ENCODE measurements at regions of chr11 and their contacts with region 1.

Region 1: DNA sequence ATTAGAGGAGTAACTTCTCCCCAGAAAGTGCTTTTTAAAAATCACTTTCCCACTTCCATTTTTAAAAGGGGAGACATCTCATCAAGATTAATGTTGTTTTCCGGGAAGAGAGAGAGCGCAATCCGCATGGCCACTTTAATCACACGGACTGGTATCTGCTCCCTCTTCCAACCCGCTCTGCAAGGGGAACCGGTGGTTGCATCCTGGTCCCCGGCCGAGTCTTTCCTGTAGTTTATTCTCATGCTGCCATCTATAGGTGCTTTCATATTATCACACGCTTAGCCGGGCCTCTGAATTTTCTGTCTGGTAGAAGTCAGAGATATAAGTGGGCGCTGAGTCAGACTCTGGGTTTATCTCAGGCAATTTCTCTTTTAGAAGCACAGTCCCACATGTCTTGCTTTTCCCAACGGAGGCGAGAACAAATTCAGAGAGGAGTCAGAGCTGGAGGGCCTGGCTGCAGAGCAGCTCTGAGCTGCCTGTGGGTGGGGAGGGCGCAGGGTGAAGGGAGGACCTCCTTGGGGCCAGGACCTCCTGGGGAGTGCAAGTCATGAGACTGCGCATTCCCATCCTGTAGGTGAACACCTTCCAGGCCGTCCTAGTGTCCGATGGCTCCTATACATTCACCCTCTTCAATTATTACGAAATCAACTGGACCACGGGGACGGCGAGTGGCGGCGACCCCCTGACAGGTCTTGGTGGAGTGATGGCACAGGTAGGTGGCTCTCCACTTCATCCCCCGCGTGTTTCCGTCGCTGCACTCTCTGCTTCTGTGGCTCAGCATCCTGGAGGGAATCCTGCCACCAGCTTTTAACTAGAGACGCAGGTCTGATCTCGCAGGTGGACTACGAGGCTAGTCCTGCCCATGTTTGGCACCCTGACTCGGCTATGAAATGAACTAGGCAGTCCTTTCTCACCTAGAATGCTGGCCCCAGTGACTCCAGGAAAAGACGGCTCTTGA is 11.7 kb downstream of the TECTA start:
- DNase-seq: peak in 3 of 5 donors; percentile 12 to 15 (median 15)
- H3K4me3 ChIP-seq: no peak overlapping the region
- H3K4me3 Mint-ChIP-seq: no peak overlapping the region
- H3K27ac ChIP-seq: no peak overlapping the region
- H3K27ac Mint-ChIP-seq: no peak overlapping the region
- H3K4me1 ChIP-seq: no peaks in the 10 kb centered on the region
- H3K4me1 Mint-ChIP-seq: no peaks in the 10 kb centered on the region
- H3K27me3 ChIP-seq: peaks cover 4% of the 10 kb centered on the region
- H3K27me3 Mint-ChIP-seq: peaks cover 3 to 9% of the 10 kb centered on the region in 2 donors

Region 2: DNA sequence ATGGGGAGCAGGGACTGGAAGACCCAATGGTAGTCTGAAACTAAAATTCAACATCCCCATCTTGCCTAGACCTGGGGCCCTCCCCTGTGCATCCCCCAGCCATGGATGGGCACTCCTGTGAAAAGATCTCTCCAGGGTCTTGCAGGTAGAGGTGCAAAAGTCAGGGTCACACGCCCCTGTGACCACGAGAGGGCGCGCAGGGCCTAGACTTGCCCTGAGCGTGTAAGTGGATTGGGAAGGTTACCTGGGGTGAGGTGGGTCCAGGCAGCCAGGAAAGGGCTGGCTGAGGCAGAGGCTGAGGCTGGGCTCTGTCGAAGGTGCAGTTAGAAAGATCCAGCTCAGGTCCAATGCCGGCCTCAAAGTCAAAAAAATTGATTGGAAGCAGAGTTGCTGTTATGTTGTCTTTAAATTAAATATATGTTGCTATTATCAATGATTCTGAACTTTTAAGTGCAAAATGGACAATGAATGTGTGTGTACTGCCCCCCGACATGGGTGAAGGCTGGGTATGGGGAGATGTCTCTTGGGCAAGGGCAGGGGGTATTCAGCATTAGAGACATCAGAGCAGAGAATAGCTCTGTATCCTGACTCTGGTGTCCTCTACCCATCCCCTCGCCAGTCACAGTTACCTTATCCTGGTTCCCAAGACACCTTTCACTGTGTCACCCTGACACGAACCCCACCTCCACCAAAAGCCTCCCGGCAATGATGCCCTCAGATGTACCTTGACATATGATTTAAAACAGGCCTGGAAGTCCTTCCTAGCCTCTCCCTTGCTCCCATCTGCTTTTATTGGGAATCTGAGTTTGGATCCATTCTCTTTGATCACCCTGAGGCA is 877.5 kb before region 1 on chr11:
- CTCF ChIA-PET with region 1: no interaction called
- POLR2A ChIA-PET with region 1: no interaction called
- intact Hi-C with region 1: loop called (anchors 5 kb)
- DNase-seq: peak in 4 of 5 donors; percentile 26 to 32 (median 29)
- H3K4me3 ChIP-seq: no peak overlapping the region
- H3K4me3 Mint-ChIP-seq: no peak overlapping the region
- H3K27ac ChIP-seq: no peak overlapping the region
- H3K27ac Mint-ChIP-seq: no peak overlapping the region
- H3K4me1 ChIP-seq: no peaks in the 10 kb centered on the region
- H3K4me1 Mint-ChIP-seq: no peaks in the 10 kb centered on the region
- H3K27me3 ChIP-seq: no peaks in the 10 kb centered on the region
- H3K27me3 Mint-ChIP-seq: peaks cover 26 to 29% of the 10 kb centered on the region in 2 donors

Region 3: DNA sequence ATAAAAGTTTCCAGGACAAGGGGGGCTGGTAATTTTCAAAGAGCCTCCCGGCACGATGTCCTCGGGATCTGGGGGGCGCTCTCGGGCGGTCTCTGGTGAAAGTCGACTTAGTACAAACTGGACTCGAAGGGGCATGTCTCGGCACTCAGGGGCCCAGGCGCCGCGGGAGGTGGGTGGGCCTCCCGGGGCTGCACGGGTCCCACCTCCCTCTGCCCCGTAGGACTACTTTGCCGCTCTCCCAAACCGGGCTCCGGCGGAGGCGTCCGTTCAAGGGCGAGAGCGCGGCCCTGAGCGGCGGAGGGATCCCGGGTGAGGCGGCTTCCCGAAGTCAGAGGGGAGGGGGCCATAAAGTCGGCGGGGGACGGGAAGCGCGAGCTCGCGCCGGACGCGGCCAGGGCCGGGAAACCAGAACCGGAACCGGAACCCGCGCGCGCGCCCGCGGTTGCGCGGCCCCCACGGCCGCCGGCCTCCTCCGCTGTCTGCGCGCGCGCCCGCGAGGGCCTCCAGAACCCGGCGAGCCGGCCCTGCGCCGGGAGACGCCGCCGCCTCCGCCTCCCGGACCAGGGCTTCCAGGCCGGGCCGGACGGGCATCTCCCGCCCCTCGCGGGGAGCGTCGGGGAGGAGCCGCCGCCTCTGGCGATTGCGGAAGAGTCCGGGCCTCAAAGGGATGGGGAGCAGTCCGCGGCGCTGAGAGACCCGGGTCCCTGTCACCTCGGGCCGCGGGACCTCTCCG is 776.7 kb before region 1 on chr11 and contains the start of gene ARHGEF12:
- CTCF ChIA-PET with region 1: no interaction called
- POLR2A ChIA-PET with region 1: no interaction called
- intact Hi-C with region 1: loop called (anchors 2 kb)
- DNase-seq: peak; percentile 48 to 69 (median 62)
- H3K4me3 ChIP-seq: peak within 1 kb of the TSS; percentile 44 to 54
- H3K4me3 Mint-ChIP-seq: peak within 1 kb of the TSS; percentile 87 to 92 (median 90)
- H3K27ac ChIP-seq: no peak within 1 kb of the TSS
- H3K27ac Mint-ChIP-seq: peak within 1 kb of the TSS in 6 of 7 donors; percentile 23 to 86 (median 76)
- H3K4me1 ChIP-seq: peaks cover 33% of the 10 kb centered on the region
- H3K4me1 Mint-ChIP-seq: peaks cover 22 to 39% (median 30%) of the 10 kb centered on the region in 4 donors
- H3K27me3 ChIP-seq: peaks cover 13% of the 10 kb centered on the region
- H3K27me3 Mint-ChIP-seq: peaks cover 33 to 39% of the 10 kb centered on the region in 2 donors
- total RNA-seq, gene ARHGEF12: 4.6 to 5.0 TPM

Region 4: GRCh38 chr11:120929664-120930154 is 183.1 kb before region 1 on chr11:
- CTCF ChIA-PET with region 1: no interaction called
- POLR2A ChIA-PET with region 1: no interaction called
- intact Hi-C with region 1: loop called (anchors 10 kb)
- DNase-seq: peak in 2 of 5 donors; percentile 11 to 28
- H3K4me3 ChIP-seq: no peak overlapping the region
- H3K4me3 Mint-ChIP-seq: no peak overlapping the region
- H3K27ac ChIP-seq: no peak overlapping the region
- H3K27ac Mint-ChIP-seq: no peak overlapping the region
- H3K4me1 ChIP-seq: no peaks in the 10 kb centered on the region
- H3K4me1 Mint-ChIP-seq: no peaks in the 10 kb centered on the region
- H3K27me3 ChIP-seq: no peaks in the 10 kb centered on the region
- H3K27me3 Mint-ChIP-seq: peaks cover 3 to 7% of the 10 kb centered on the region in 2 donors

Region 5: DNA sequence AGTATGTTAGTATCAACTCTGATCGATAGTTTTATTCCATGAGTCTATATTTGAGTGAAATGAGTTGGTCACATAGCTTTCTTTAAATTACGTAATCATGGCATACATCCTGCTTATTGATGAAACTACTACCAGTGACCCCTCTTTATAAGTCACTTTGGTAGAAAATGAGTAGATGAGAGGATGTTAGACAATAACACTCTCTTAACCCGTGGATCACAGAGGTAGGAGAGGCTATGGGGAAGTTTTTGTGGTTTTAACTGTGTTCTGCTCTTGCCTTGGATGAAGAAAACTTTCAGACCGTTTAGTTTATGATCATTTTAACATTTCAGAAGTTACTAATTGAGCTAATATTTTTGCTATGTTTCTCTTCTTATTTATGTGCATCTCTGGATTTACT is 54.9 kb before region 1 on chr11:
- CTCF ChIA-PET with region 1: no interaction called
- POLR2A ChIA-PET with region 1: no interaction called
- intact Hi-C with region 1: no loop called
- DNase-seq: no peak
- H3K4me3 ChIP-seq: no peak overlapping the region
- H3K4me3 Mint-ChIP-seq: no peak overlapping the region
- H3K27ac ChIP-seq: no peak overlapping the region
- H3K27ac Mint-ChIP-seq: no peak overlapping the region
- H3K4me1 ChIP-seq: no peaks in the 10 kb centered on the region
- H3K4me1 Mint-ChIP-seq: no peaks in the 10 kb centered on the region
- H3K27me3 ChIP-seq: no peaks in the 10 kb centered on the region
- H3K27me3 Mint-ChIP-seq: no peaks in the 10 kb centered on the region